PC-3 (cell line): ENCODE measurements at regions of chr10 and their contacts with region 1.

Region 1: DNA sequence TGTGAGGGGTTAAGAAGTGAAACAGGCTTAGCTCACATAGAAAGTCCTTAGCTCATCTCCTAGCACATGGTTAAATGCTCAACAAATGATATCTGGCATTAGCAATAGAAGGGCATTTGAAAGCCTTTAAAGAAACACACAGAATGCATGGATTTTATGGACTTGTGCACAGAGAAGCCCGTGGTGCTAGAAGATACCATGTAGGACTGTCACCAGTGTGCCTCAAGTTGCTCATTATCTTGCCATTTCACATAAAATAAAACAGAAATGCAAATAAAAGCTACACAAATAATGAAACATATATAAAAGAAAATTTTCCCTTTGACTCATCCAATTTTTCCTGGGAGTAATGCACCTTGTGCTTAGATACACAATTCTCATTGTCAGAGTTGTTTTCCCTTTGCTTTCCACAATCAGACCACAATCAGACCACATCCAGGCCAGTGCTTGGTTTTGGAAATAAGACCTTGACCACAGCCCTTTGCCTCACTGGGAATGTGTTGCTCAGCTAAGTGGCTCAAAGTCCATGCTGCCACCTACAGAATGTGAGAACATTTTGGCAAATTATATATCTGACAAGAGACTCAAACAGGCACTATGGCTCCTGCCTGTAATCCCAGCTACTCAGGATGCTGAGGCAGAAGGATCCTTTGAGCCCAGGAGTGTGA is 9.5 kb upstream of the WDR11 start:
- DNase-seq: peak; percentile 92
- ATAC-seq: peak; percentile 82
- H3K4me3 ChIP-seq: peak overlapping the region; percentile 19; the same call in 1 of the 2 replicates
- H3K27ac ChIP-seq: peak overlapping the region; percentile 96
- H3K4me1 ChIP-seq: peaks cover 40% of the 10 kb centered on the region
- H3K27me3 ChIP-seq: no peaks in the 10 kb centered on the region
- CTCF ChIP-seq: peak; percentile 46; the same call in 1 of the 2 replicates

Region 2: DNA sequence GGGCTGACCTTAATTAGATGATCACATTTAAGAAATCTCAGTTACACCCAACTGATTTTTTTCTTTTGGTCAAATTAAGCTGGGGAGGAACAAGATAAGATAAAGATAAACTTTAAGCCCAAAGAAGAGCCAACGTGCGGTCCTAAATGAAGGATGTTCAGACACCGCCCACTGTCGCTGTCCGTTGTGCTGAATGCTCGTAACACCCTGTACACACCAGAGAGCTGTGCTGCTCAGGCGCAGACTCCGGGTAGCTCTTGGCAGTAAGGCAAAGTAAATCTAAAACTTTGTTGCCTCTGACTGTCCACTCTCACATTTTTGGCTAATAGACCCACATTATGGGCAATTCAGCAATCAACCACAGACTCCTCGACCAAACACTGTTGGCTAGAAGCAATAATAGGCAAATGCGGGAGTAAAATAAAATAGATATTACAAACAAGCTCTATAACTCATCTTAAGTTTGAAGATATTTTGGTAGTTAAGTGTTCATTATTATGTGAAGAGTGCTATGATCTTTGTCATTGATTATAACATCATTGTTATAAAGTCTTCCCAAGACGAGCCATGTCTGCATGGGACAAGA is 327.5 kb before region 1 on chr10:
- CTCF ChIA-PET with region 1: no interaction called
- POLR2A ChIA-PET with region 1: no interaction called
- intact Hi-C with region 1: loop called (anchors 5 kb)
- DNase-seq: peak; percentile 42
- ATAC-seq: no peak
- H3K4me3 ChIP-seq: no peak overlapping the region
- H3K27ac ChIP-seq: no peak overlapping the region
- H3K4me1 ChIP-seq: peaks cover 42% of the 10 kb centered on the region
- H3K27me3 ChIP-seq: no peaks in the 10 kb centered on the region
- CTCF ChIP-seq: no peak

Region 3: DNA sequence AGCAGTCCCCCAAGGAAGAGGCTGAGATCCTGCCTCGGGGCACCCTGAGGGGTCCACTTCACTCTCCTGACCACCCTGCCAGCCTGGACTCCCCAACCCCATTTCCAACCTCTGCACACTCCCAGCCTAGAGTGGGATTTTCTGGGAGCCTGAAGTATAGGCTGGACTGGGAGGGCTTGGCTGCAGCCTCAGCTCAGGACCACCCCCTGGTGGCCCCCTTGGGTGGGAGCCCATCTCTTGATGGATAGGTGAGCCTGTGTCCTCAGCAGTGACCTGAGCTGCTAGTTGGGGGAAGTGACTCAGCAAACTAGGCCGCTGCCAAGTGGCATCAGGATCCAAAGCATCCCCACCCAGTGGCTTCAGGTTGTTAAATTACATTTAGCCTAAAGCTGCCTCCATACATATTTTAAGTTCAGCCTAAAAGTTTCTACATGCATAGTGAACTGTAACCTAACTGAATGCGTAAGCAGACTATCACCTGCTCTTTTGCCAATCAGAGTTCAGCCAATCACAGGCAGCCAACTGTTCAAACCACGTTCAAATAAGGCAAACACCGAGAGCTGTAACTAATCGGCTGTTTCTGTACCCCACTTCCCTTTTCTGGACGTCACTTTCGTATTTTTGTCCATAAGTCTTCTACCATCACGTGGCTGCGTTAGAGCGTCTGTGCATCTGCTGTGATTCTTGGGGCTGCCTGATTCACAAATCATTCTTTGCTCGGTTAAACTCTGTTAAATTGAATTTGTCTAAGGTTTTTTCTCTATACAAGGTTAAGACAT is 240.6 kb before region 1 on chr10:
- CTCF ChIA-PET with region 1: no interaction called
- POLR2A ChIA-PET with region 1: no interaction called
- intact Hi-C with region 1: loop called (anchors 2 kb)
- DNase-seq: peak; percentile 84
- ATAC-seq: peak; percentile 83
- H3K4me3 ChIP-seq: no peak overlapping the region
- H3K27ac ChIP-seq: peak overlapping the region; percentile 87
- H3K4me1 ChIP-seq: peaks cover 17% of the 10 kb centered on the region
- H3K27me3 ChIP-seq: no peaks in the 10 kb centered on the region
- CTCF ChIP-seq: peak; percentile 73